Endothelial cell of umbilical vein (primary cell): ENCODE measurements at regions of chr12 and their contacts with region 1.

Region 1: GRCh38 chr12:12736759-12737676 is 19.9 kb downstream of the CDKN1B start:
- DNase-seq: peak; percentile 67
- H3K4me3 ChIP-seq: no peak overlapping the region
- H3K27ac ChIP-seq: peak overlapping the region; percentile 39
- H3K4me1 ChIP-seq: peaks cover 13% of the 10 kb centered on the region
- H3K27me3 ChIP-seq: no peaks in the 10 kb centered on the region
- CTCF ChIP-seq: peak; percentile 44 to 49
- POLR2A ChIP-seq: no peak

Region 2: DNA sequence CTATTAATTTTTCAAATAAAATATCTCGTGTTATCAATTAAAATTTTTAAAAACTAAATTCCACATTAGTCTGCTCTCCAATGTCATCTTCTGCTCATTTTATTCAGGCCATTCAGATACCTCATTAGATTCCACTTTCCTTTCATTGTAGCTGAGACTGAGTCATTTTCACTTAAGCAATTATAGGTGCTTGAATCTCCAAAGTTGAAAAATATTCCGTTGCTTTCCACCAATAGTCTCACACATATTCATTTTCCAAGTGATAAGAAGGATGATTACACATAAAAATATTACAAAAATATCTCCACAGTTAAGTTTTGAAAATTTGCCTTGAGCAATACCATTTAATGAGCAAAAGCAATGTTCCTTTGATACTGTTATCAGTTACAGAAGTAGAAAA is 1977.4 kb before region 1 on chr12:
- CTCF ChIA-PET with region 1: no interaction called
- POLR2A ChIA-PET with region 1: no interaction called
- dilution Hi-C with region 1: no loop called
- intact Hi-C with region 1: no loop called
- DNase-seq: no peak
- H3K4me3 ChIP-seq: no peak overlapping the region
- H3K27ac ChIP-seq: no peak overlapping the region
- H3K4me1 ChIP-seq: no peaks in the 10 kb centered on the region
- H3K27me3 ChIP-seq: peaks cover 7 to 48% of the 10 kb centered on the region in 2 experiments
- CTCF ChIP-seq: no peak
- POLR2A ChIP-seq: no peak

Region 3: GRCh38 chr12:12645485-12645884 is 91.5 kb before region 1 on chr12:
- CTCF ChIA-PET with region 1: interaction called, 14 read pairs
- POLR2A ChIA-PET with region 1: no interaction called
- dilution Hi-C with region 1: no loop called
- intact Hi-C with region 1: no loop called
- DNase-seq: peak; percentile 6
- H3K4me3 ChIP-seq: no peak overlapping the region
- H3K27ac ChIP-seq: no peak overlapping the region
- H3K4me1 ChIP-seq: no peaks in the 10 kb centered on the region
- H3K27me3 ChIP-seq: no peaks in the 10 kb centered on the region
- CTCF ChIP-seq: peak; percentile 32 to 46
- POLR2A ChIP-seq: no peak

Region 4: DNA sequence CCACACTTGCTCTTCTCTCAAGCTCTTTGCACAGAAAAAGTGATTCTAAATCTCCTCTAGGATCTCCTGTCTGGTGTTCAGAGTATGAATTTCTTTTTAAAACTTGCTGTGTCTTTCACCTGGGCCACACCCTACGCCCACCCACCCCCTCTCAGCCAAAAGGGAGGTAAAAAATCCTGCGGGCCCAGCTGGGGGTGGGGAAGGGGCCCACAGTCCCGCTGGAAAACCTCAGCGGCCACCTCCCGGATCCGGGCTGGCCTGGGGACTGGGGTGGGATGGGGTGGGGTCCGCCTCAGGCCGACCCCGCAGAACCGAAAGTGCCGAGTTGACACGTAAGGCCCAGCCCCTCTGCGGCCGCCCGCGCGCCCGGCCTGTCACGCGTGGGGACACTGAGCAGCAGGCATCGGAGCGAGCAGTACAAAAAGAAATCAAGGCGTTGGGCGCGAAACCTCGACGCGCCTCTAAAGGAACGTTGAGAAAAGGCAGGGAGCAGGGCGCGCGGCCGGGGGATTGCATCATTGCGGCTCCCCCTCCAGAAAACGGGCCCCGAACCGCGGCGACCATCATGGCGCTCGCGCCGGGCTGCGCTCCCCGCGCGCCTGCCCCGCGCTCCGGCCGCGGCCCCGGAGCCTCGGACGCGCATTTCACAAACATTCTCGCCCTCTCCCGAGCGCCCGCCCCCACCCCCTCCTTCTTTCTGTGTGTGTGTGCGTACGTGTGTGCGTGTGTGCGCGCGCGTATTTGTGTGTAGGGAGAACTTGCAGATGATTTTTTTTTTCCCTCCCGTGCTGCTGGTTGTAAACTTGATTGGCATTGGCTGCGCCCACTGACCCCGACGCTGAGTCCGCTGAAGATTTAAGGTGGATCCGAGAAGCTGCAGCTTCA is 12.1 kb before region 1 on chr12:
- CTCF ChIA-PET with region 1: interaction called, 159 read pairs
- POLR2A ChIA-PET with region 1: interaction called, 5 read pairs
- dilution Hi-C with region 1: no loop called
- intact Hi-C with region 1: no loop called
- DNase-seq: peak; percentile 98
- H3K4me3 ChIP-seq: peak overlapping the region; percentile 13 to 97 (median 95)
- H3K27ac ChIP-seq: peak overlapping the region; percentile 98
- H3K4me1 ChIP-seq: peaks cover 38% of the 10 kb centered on the region
- H3K27me3 ChIP-seq: no peaks in the 10 kb centered on the region
- CTCF ChIP-seq: no peak
- POLR2A ChIP-seq: peak; percentile 75

Region 5: GRCh38 chr12:12757121-12757520 is 20.1 kb after region 1 on chr12:
- CTCF ChIA-PET with region 1: interaction called, 22 read pairs
- POLR2A ChIA-PET with region 1: no interaction called
- dilution Hi-C with region 1: no loop called
- intact Hi-C with region 1: no loop called
- DNase-seq: no peak
- H3K4me3 ChIP-seq: no peak overlapping the region
- H3K27ac ChIP-seq: no peak overlapping the region
- H3K4me1 ChIP-seq: peaks cover 16% of the 10 kb centered on the region
- H3K27me3 ChIP-seq: no peaks in the 10 kb centered on the region
- CTCF ChIP-seq: no peak
- POLR2A ChIP-seq: no peak

Region 6: GRCh38 chr12:12779529-12779928 is 42.5 kb after region 1 on chr12:
- CTCF ChIA-PET with region 1: interaction called, 25 read pairs
- POLR2A ChIA-PET with region 1: interaction called, 4 read pairs
- dilution Hi-C with region 1: no loop called
- intact Hi-C with region 1: loop called (anchors 1 kb)
- DNase-seq: peak; percentile 95
- H3K4me3 ChIP-seq: no peak overlapping the region
- H3K27ac ChIP-seq: peak overlapping the region; percentile 88
- H3K4me1 ChIP-seq: peaks cover 36% of the 10 kb centered on the region
- H3K27me3 ChIP-seq: no peaks in the 10 kb centered on the region
- CTCF ChIP-seq: no peak
- POLR2A ChIP-seq: peak; percentile 35